AG04449 (cell line): ENCODE measurements at regions of chr19 and their contacts with region 1.

Region 1: GRCh38 chr19:47697863-47698609 is 15.2 kb upstream of the EHD2 start:
- DNase-seq: no peak
- H3K4me3 ChIP-seq: no peak overlapping the region
- CTCF ChIP-seq: peak; percentile 99

Region 2: GRCh38 chr19:47644762-47645482 is 53.1 kb before region 1 on chr19:
- CTCF ChIA-PET with region 1: no interaction called
- POLR2A ChIA-PET with region 1: no interaction called
- DNase-seq: no peak
- H3K4me3 ChIP-seq: no peak overlapping the region
- CTCF ChIP-seq: no peak

Region 3: DNA sequence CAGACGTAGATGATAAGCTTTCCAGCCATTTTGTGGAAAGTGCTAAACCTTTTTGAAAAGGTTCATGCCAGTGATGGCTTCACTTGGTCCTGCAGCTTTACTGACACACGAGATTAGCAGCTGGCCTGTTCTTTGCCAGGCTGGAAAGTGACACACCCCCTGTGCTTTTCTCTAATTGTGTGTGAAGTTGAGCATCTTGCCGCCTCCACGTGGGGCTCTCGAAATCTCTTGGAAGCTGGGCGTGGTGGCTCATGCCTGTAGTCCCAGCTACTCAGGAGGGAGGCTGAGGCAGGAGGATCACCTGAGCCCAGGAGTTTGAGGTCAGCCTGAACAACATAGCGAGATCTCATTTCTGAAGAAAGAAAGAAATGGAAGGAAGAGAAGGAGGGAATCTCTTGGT is 10.1 kb before region 1 on chr19:
- CTCF ChIA-PET with region 1: interaction called, 18 read pairs
- POLR2A ChIA-PET with region 1: no interaction called
- DNase-seq: no peak
- H3K4me3 ChIP-seq: no peak overlapping the region
- CTCF ChIP-seq: no peak

Region 4: GRCh38 chr19:47832723-47833122 is 134.7 kb after region 1 on chr19:
- CTCF ChIA-PET with region 1: no interaction called
- POLR2A ChIA-PET with region 1: no interaction called
- DNase-seq: no peak
- H3K4me3 ChIP-seq: no peak overlapping the region
- CTCF ChIP-seq: no peak